SK-N-SH (cell line): ENCODE measurements at regions of chr1 and their contacts with region 1.

Region 1: DNA sequence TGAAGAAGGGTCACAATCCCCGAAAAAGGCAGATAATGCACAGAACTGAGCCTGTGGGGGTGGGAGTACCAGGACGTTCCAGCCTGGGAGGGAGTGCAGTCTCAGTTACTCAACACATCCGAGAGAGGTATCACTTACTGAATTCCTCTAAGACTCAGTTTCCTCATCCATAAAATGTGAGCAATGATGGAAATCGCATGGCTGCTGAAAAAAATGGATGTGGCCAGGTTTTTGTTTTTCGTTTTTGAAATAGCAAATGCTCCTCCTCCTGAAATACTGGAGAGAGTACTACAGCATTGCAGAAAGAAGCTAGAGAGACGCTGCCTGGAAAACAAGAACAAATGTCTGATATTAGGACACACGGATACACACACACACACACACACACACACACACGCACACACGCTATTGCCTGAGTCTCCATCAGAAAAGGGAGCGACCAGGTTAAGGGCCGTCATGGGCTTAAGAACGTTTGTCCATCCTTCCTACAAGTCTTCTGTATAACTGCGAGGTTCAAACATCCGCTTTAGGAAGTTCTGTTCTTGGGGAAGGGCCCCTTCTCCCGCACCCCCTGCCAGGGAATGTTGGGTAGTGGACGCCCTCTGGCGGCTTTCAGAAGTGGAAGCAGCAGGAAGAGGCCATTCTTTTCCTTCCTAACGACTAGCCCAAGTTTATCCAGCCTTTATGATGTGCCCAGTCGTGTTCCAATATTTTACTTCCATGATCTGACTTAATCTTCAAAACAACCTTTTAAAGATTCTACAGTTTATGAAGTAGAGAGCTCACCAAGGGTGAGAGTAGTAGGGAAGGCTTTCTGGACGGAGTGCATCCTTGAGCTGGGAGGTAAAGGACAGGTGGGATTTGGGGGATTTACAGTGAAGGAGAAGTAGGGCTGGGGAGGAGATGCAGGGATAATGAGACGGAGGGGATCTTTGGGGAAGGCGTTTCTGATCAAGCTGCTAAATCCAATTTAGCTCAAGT is 699 bp upstream of the NES start:
- DNase-seq: peak; percentile 78
- H3K4me3 ChIP-seq: peak overlapping the region; percentile 55 to 71
- H3K27ac ChIP-seq: peak overlapping the region; percentile 40 to 67; a peak in 3 of 4 replicates
- H3K4me1 ChIP-seq: peaks cover 21 to 42% of the 10 kb centered on the region in 2 experiments; a peak in 3 of 4 replicates
- H3K27me3 ChIP-seq: no peaks in the 10 kb centered on the region
- CTCF ChIP-seq: peak; percentile 97
- EP300 ChIP-seq: no peak
- RAD21 ChIP-seq: peak; percentile 98

Region 2: DNA sequence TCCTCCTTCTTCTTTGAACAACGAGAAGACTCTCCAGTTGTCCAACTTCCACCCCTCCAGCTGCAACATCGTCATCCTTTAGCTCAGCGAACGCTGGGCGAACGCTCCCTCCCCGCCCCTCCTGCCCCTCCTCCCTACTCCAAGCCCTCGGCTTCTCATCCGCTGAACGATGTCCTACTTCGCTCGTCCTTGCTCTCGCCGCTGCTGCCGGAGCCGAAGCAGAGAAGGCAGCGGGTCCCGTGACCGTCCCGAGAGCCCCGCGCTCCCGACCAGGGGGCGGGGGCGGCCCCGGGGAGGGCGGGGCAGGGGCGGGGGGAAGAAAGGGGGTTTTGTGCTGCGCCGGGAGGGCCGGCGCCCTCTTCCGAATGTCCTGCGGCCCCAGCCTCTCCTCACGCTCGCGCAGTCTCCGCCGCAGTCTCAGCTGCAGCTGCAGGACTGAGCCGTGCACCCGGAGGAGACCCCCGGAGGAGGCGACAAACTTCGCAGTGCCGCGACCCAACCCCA is 36.1 kb before region 1 on chr1 and contains the start of gene BCAN:
- CTCF ChIA-PET with region 1: interaction called, 13 read pairs
- POLR2A ChIA-PET with region 1: interaction called, 4 read pairs
- DNase-seq: peak; percentile 86
- H3K4me3 ChIP-seq: peak within 1 kb of the TSS; percentile 39 to 46
- H3K27ac ChIP-seq: no peak within 1 kb of the TSS
- H3K4me1 ChIP-seq: peaks cover 0 to 34% of the 10 kb centered on the region in 2 experiments; a peak in 1 of 4 replicates
- H3K27me3 ChIP-seq: peaks cover 35% of the 10 kb centered on the region
- CTCF ChIP-seq: no peak
- EP300 ChIP-seq: no peak
- RAD21 ChIP-seq: no peak
- polyA plus RNA-seq, gene BCAN: 0.13 and 0.25 TPM in 2 replicates

Region 3: DNA sequence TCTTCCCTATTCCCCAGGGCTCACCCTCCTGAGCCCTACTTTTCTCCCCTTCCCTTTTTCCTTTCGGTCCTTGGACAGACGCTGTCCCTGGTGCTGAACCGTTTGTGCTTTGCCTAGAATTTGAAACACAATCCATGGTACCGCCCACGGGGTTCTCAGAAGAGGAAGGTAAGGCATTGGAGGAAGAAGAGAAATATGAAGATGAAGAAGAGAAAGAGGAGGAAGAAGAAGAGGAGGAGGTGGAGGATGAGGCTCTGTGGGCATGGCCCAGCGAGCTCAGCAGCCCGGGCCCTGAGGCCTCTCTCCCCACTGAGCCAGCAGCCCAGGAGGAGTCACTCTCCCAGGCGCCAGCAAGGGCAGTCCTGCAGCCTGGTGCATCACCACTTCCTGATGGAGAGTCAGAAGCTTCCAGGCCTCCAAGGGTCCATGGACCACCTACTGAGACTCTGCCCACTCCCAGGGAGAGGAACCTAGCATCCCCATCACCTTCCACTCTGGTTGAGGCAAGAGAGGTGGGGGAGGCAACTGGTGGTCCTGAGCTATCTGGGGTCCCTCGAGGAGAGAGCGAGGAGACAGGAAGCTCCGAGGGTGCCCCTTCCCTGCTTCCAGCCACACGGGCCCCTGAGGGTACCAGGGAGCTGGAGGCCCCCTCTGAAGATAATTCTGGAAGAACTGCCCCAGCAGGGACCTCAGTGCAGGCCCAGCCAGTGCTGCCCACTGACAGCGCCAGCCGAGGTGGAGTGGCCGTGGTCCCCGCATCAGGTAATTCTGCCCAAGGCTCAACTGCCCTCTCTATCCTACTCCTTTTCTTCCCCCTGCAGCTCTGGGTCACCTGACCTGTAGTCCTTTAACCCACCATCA is 25.5 kb before region 1 on chr1:
- CTCF ChIA-PET with region 1: interaction called, 682 read pairs
- POLR2A ChIA-PET with region 1: no interaction called
- DNase-seq: no peak
- H3K4me3 ChIP-seq: no peak overlapping the region
- H3K27ac ChIP-seq: no peak overlapping the region
- H3K4me1 ChIP-seq: peaks cover 0 to 16% of the 10 kb centered on the region in 2 experiments; a peak in 1 of 4 replicates
- H3K27me3 ChIP-seq: no peaks in the 10 kb centered on the region
- CTCF ChIP-seq: no peak
- EP300 ChIP-seq: no peak
- RAD21 ChIP-seq: no peak

Region 4: DNA sequence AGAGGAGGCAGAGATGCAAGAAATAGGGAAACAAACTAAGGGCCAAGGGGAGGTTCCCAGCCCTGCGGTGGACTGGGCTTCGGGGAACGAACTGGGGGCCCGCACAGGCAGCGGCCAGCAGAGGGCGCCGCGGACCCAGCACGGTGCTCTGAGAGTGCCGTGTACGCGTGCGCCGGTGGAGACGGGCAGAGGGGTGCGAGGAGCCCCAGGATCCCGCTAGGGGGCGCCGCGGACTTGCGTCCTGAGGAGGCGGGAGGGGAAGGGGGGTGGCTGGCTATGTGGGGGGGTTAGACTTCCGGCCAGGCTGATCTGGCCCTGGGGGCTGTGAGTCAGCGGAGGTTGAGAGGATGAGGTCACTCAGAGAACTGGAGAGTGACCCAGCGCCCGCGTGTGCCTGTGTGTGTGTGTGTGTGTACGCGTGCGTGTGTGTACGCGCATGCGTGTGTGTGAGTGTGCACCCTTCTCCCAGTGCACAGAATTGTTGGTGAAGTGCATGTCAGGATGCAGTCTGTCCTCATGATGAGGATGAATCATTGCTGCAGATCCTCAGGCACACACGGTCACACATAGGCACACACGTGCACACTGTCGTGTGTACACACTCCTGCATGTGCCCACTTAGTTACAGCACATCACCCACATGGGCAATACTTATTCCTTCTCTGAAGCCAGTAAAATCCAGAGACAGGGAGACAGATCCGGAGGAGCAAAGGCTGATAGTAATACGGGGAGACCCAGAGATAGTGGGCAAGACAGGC is 17.7 kb before region 1 on chr1:
- CTCF ChIA-PET with region 1: interaction called, 682 read pairs
- POLR2A ChIA-PET with region 1: interaction called, 36 read pairs
- DNase-seq: peak; percentile 99
- H3K4me3 ChIP-seq: peak overlapping the region; percentile 34 to 54; a peak in 2 of 4 replicates
- H3K27ac ChIP-seq: peak overlapping the region; percentile 72 to 87
- H3K4me1 ChIP-seq: peaks cover 44 to 48% of the 10 kb centered on the region in 2 experiments; a peak in 3 of 4 replicates
- H3K27me3 ChIP-seq: no peaks in the 10 kb centered on the region
- CTCF ChIP-seq: peak; percentile 99
- EP300 ChIP-seq: peak in 1 of 2 experiments; percentile 37; a peak in 1 of 4 replicates
- RAD21 ChIP-seq: peak; percentile 90

Region 5: DNA sequence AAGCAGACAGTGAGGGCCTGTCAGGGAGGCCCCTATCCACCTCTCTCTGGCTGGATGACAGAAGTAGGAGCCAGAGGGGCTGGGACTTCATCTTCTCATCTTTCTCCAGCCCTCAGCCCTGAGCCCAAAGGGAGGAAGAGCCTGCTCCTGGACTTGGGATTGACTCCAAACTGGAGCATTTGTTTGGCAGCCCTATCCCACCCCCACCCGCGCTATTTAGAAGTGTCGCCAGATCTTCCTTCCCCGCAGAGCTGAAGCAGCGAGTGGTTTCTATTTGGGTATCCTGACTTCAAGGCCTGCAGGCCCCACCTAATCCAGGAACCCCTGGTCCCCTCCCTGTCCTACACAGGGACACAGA is 10.3 kb before region 1 on chr1:
- CTCF ChIA-PET with region 1: interaction called, 682 read pairs
- POLR2A ChIA-PET with region 1: interaction called, 36 read pairs
- DNase-seq: no peak
- H3K4me3 ChIP-seq: no peak overlapping the region
- H3K27ac ChIP-seq: peak overlapping the region; percentile 11 to 75; a peak in 2 of 4 replicates
- H3K4me1 ChIP-seq: peaks cover 19 to 44% of the 10 kb centered on the region in 2 experiments; a peak in 3 of 4 replicates
- H3K27me3 ChIP-seq: no peaks in the 10 kb centered on the region
- CTCF ChIP-seq: no peak
- EP300 ChIP-seq: no peak
- RAD21 ChIP-seq: no peak

Region 6: GRCh38 chr1:156980551-156980950 is 302.6 kb after region 1 on chr1:
- CTCF ChIA-PET with region 1: no interaction called
- POLR2A ChIA-PET with region 1: no interaction called
- DNase-seq: no peak
- H3K4me3 ChIP-seq: no peak overlapping the region
- H3K27ac ChIP-seq: no peak overlapping the region
- H3K4me1 ChIP-seq: no peaks in the 10 kb centered on the region
- H3K27me3 ChIP-seq: no peaks in the 10 kb centered on the region
- CTCF ChIP-seq: no peak
- EP300 ChIP-seq: no peak
- RAD21 ChIP-seq: no peak